GM12878 (cell line): ENCODE measurements at regions of chr1 and their contacts with region 1.

Region 1: DNA sequence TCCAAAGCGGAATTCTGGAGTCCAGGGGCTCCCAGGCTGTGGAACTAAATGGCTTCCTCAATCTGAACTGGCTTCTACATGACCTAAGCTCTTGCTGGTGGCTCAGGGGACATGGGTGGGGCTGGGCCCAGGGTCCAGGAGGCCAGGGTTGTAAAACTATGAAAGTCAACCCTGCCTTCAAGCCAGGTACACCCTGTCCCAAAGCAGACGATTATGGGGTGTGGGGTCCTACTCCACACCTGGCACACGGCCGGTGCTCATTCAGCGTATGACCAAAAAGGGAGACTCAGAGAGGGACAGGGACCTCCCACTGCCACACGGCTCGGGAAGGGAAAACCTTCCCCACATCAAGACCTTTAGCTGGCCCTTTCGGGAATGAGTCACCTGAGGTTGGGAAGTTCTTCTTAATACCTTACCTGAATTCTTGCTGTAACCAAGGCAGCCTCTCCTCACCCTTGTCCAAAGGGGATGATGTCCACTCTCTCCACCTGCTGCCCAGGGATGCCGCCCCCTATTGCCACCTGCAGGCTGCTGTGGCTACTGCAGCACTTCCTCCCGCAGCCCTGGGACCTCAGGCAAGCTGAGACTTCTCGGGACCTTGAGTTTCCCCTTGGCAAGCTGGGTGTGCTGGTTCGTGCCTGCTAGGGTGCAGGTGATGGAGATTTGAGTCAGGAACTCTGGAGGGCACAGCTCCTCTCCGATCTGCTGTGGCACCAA is 32.2 kb downstream of the RUNX3 start:
- DNase-seq: no peak
- ATAC-seq: peak; percentile 71
- H3K4me3 ChIP-seq: no peak overlapping the region
- H3K27ac ChIP-seq: no peak overlapping the region
- H3K4me1 ChIP-seq: peaks cover 7% of the 10 kb centered on the region
- H3K27me3 ChIP-seq: no peaks in the 10 kb centered on the region
- CTCF ChIP-seq: peak; percentile 83 to 92 (median 87)
- EP300 ChIP-seq: no peak
- POLR2A ChIP-seq: peak; percentile 43; the same call in 1 of the 2 replicates
- RAD21 ChIP-seq: peak; percentile 66

Region 2: GRCh38 chr1:24861821-24862727 is 35.9 kb before region 1 on chr1:
- CTCF ChIA-PET with region 1: interaction called, 133 read pairs
- POLR2A ChIA-PET with region 1: interaction called, 5 read pairs
- RAD21 ChIA-PET with region 1: interaction called, 5 read pairs
- SMC1A ChIA-PET with region 1: interaction called, 7 read pairs
- in situ Hi-C with region 1: no loop called
- intact Hi-C with region 1: no loop called
- DNase-seq: no peak
- ATAC-seq: no peak
- H3K4me3 ChIP-seq: no peak overlapping the region
- H3K27ac ChIP-seq: no peak overlapping the region
- H3K4me1 ChIP-seq: peaks cover 5% of the 10 kb centered on the region
- H3K27me3 ChIP-seq: peaks cover 0 to 3% of the 10 kb centered on the region in 2 experiments; a peak in 2 of 4 replicates
- CTCF ChIP-seq: no peak
- EP300 ChIP-seq: no peak
- POLR2A ChIP-seq: no peak
- RAD21 ChIP-seq: no peak

Region 3: GRCh38 chr1:24919791-24920532 is 22.0 kb after region 1 on chr1:
- CTCF ChIA-PET with region 1: interaction called, 10 read pairs
- POLR2A ChIA-PET with region 1: interaction called, 7 read pairs
- RAD21 ChIA-PET with region 1: interaction called, 7 read pairs
- SMC1A ChIA-PET with region 1: interaction called, 6 read pairs
- in situ Hi-C with region 1: no loop called
- intact Hi-C with region 1: no loop called
- DNase-seq: no peak
- ATAC-seq: no peak
- H3K4me3 ChIP-seq: no peak overlapping the region
- H3K27ac ChIP-seq: peak overlapping the region; percentile 67; the same call in 1 of the 2 replicates
- H3K4me1 ChIP-seq: peaks cover 83% of the 10 kb centered on the region
- H3K27me3 ChIP-seq: no peaks in the 10 kb centered on the region
- CTCF ChIP-seq: no peak
- EP300 ChIP-seq: no peak
- POLR2A ChIP-seq: no peak
- RAD21 ChIP-seq: no peak